ENCODE measurements at regions of chr7 and their contacts with region 1.

Region 1: GRCh38 chr7:120792091-120792860 is 65.7 kb downstream of the TSPAN12 start:
- DNase-seq: peak; percentile 84
- ATAC-seq: peak; percentile 86

Region 2: GRCh38 chr7:120941064-120941463 is 148.8 kb after region 1 on chr7:
- intact Hi-C with region 1: loop called (anchors 5 kb)
- DNase-seq: no peak
- ATAC-seq: peak; percentile 58